ENCODE measurements at regions of chr10 and their contacts with region 1.

Region 1: DNA sequence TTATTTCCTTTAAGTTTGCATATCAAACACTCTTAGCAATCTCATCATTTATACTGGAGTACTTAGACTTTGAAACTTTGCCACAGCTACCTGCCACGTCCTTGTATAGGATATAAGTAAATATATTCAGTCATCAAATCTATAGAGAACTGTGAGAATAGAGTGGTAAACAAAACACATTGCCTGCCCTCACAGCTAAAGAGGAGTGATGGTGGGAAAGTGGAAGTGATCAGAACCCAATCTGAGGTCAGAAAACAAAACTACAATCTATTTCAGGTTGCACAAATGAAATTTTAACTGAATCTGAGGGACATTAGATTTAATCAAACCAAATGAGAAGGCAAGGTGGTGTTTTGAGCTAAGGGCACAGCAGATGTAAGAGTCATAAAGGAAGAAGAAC is 74.8 kb downstream of the ZEB1 start:
- DNase-seq: no peak
- ATAC-seq: no peak
- H3K4me3 ChIP-seq: no peak overlapping the region
- H3K27ac ChIP-seq: no peak overlapping the region
- H3K4me1 ChIP-seq: peaks cover 0 to 49% (median 27%) of the 10 kb centered on the region in 12 donors
- H3K27me3 ChIP-seq: no peaks in the 10 kb centered on the region
- CTCF ChIP-seq: no peak
- POLR2A ChIP-seq: no peak

Region 2: DNA sequence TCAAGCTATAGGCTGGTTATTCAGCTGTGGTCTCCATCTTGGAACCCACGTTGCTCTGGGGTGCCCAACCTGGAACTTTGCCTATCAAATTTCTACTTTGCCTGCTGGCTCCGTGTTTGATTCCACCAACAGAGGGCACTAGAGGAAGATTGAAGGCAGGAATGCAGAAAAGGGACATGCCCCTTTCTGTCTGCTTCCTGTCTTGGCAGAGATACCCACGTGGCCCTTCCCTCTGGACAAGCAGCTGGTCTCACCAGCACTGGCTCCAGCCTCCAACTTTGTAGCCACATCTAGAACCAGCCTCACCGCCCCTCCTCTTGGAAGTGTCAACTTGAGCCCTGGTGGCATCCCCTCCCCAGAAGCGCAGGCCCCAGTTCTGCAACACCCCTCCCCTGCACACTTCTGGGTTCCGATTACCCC is 310.1 kb before region 1 on chr10:
- intact Hi-C with region 1: no loop called
- DNase-seq: peak in 2 of 5 donors; percentile 35 to 55
- ATAC-seq: peak in 3 of 4 donors; percentile 58 to 73 (median 69)
- H3K4me3 ChIP-seq: no peak overlapping the region
- H3K27ac ChIP-seq: no peak overlapping the region
- H3K4me1 ChIP-seq: peaks cover 0 to 6% (median 0%) of the 10 kb centered on the region in 12 donors
- H3K27me3 ChIP-seq: no peaks in the 10 kb centered on the region
- CTCF ChIP-seq: peak; percentile 21 to 63 (median 46)
- POLR2A ChIP-seq: no peak

Region 3: GRCh38 chr10:31345886-31346285 is 48.0 kb before region 1 on chr10:
- intact Hi-C with region 1: loop called in 1 of 10 experiments (anchors 5 kb)
- DNase-seq: no peak
- ATAC-seq: no peak
- H3K4me3 ChIP-seq: no peak overlapping the region
- H3K27ac ChIP-seq: peak overlapping the region in 1 of 12 donors; percentile 27
- H3K4me1 ChIP-seq: peaks cover 0 to 82% (median 58%) of the 10 kb centered on the region in 12 donors
- H3K27me3 ChIP-seq: no peaks in the 10 kb centered on the region
- CTCF ChIP-seq: no peak
- POLR2A ChIP-seq: no peak